ENCODE measurements at regions of chr1 and their contacts with region 1.

Region 1: DNA sequence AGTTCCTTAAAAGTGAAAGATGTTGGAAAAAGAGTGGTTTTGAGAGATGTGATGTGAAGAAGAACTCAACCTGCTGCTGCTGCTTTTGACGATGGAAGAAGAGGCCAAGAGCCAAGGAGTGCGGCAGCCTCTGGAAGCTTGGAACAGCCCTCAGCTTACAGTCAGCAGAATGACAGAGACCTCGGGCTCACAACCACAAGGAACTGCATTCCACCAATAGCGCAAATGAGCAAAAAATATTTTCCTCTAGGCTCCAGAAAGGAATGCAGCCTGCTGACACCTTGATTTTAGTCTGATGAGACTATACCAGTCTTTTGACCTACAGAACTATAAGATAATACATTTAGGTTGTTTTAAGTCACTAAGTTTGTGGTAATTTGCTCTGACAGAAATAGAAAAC is 10.2 kb downstream of the SDHB start:
- DNase-seq: no peak
- H3K4me3 ChIP-seq: no peak overlapping the region
- CTCF ChIP-seq: no peak

Region 2: GRCh38 chr1:16971341-16972188 is 72.1 kb before region 1 on chr1:
- in situ Hi-C with region 1: loop called (anchors 5 kb)
- DNase-seq: no peak
- H3K4me3 ChIP-seq: no peak overlapping the region
- CTCF ChIP-seq: no peak

Measured in astrocyte of the cerebellum (primary cell).